Activated naive CD4-positive, alpha-beta T cell treated with anti-CD3 and anti-CD28 coated beads for 36 hours (primary cell): ENCODE measurements at regions of chr14 and their contacts with region 1.

Region 1: DNA sequence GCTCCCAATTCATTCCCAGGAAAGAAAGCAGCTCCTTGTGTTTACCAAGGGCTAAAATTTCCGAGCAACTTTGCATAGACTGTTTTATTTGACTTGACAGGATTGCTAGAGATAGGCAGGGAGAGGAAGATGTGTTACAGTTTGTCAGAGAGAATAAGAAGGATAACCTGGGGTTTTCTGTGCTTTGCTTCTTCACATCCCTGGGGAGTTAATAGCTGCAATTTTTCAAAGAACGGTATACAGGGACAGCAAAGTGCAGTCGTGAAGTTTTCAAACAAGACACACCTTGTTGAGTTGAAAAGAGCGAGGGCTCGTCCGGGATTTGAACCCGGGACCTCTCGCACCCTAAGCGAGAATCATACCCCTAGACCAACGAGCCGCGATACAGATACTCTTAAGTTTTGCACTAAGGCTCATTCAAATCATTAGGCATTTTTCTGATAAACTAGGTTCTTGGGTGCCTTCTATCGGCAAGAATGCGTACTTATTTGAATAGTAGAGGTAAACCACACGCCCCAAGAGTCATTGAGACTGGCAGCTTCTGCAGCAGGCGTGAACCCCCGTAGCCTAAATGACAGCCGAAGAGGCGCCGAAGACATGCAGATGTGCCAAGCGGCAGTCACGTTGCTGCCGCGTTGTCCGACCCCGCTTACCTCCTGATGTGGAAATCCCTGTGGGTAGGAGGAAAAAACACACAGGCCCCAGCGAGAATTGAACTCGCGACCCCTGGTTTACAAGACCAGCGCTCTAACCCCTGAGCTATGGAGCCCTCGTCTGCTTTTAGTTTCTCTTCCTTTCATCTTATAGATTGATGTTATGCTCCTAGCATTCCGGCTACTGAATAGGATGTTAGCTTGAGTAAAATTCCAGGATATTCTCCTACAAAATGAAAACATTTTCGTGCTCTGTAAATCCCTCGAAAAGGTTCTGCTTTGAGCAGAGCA is 22.2 kb upstream of the RNASE12 start:
- DNase-seq: peak; percentile 92
- H3K4me3 Mint-ChIP-seq: no peak overlapping the region
- H3K27ac Mint-ChIP-seq: no peak overlapping the region
- H3K4me1 Mint-ChIP-seq: peaks cover 10% of the 10 kb centered on the region
- H3K27me3 Mint-ChIP-seq: no peaks in the 10 kb centered on the region

Region 2: GRCh38 chr14:20305265-20306078 is 307.9 kb before region 1 on chr14 and contains the start of gene TTC5:
- CTCF ChIA-PET with region 1: no interaction called
- intact Hi-C with region 1: loop called (anchors 1 kb)
- DNase-seq: peak; percentile 92
- H3K4me3 Mint-ChIP-seq: peak within 1 kb of the TSS; percentile 96
- H3K27ac Mint-ChIP-seq: peak within 1 kb of the TSS; percentile 82
- H3K4me1 Mint-ChIP-seq: peaks cover 21% of the 10 kb centered on the region
- H3K27me3 Mint-ChIP-seq: no peaks in the 10 kb centered on the region
- total RNA-seq, gene TTC5: 15.2 to 18.5 TPM

Region 3: DNA sequence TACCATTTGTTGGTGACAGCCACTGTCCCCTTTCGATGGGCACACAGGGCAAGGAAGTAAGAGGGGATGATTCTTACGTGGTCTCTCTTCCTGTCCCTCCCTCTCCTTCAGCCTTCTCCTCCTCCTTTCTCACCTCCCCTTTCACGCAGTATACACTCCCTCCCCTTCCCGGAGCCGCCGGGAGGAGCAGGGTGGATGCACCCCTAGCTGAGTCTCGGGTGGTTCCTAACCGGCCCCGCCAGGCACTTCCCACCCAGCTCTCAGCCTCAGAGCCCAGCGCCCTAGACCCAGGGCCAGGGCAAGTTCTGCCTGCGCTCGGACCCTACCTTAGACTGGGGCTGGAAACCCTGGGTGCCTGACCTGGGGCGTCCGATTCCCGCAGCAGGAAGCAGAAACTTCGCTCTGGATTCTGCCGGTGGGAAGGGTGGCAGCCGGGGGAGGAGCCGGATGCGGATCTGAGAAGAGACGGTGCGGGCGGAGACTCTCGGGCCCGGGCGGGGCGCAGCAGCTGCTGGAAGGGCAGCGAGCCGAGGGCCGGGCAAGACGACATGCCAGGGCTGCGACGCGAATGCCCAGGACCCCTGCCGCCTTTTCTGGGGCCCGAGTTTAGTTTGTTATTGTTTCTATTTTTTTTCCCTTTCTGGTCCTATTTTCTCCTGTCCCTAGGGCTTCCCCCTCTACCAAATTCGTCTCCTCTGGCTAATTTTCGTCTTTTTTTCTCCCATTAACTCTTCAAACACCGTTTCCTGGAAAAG is 200.1 kb before region 1 on chr14 and contains the start of gene TEP1:
- CTCF ChIA-PET with region 1: interaction called, 14 read pairs
- intact Hi-C with region 1: loop called (anchors 1 kb)
- DNase-seq: peak; percentile 82
- H3K4me3 Mint-ChIP-seq: peak within 1 kb of the TSS; percentile 85
- H3K27ac Mint-ChIP-seq: peak within 1 kb of the TSS; percentile 89
- H3K4me1 Mint-ChIP-seq: peaks cover 32% of the 10 kb centered on the region
- H3K27me3 Mint-ChIP-seq: no peaks in the 10 kb centered on the region
- total RNA-seq, gene TEP1: 34.3 to 37.0 TPM

Region 4: GRCh38 chr14:20530771-20531571 is 82.4 kb before region 1 on chr14:
- CTCF ChIA-PET with region 1: interaction called, 4 read pairs
- intact Hi-C with region 1: loop called (anchors 1 kb)
- DNase-seq: peak; percentile 85
- H3K4me3 Mint-ChIP-seq: peak overlapping the region; percentile 59
- H3K27ac Mint-ChIP-seq: no peak overlapping the region
- H3K4me1 Mint-ChIP-seq: peaks cover 11% of the 10 kb centered on the region
- H3K27me3 Mint-ChIP-seq: no peaks in the 10 kb centered on the region

Region 5: GRCh38 chr14:20652996-20653975 is 39.9 kb after region 1 on chr14:
- CTCF ChIA-PET with region 1: interaction called, 4 read pairs
- intact Hi-C with region 1: loop called (anchors 1 kb)
- DNase-seq: peak; percentile 87
- H3K4me3 Mint-ChIP-seq: peak overlapping the region; percentile 69
- H3K27ac Mint-ChIP-seq: peak overlapping the region; percentile 66
- H3K4me1 Mint-ChIP-seq: peaks cover 25% of the 10 kb centered on the region
- H3K27me3 Mint-ChIP-seq: peaks cover 54% of the 10 kb centered on the region

Region 6: DNA sequence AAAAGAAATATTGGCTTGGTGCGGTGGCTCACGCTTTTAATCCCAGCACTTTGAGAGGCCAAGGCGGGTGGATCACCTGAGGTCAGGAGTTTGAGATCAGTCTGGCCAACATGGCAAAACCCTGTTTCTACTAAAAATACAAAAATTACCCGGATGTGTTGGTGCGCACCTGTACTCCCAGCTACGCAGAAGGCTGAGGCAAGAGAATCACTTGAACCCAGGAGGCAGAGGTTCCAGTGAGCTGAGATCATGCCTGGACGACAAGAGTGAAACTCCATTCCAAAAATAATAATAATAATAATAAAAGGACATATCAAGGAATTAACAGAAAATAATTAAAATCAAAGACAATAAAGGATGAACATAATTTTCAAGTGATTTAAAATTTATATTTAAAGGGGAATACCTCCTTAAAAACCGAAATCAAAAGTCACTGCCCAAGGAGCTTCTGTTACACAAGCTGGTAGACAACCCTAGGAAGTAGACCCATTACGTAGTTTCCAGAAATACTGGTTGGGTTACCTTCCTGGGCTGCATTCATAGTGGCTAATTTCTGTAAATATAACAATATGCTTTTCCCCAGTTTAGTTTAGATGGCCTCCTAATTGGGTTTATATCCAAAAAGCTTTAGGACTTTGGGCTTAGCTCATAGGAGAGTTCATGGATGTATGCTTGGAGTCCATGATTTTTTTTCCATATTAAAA is 130.0 kb after region 1 on chr14:
- CTCF ChIA-PET with region 1: no interaction called
- intact Hi-C with region 1: no loop called
- DNase-seq: no peak
- H3K4me3 Mint-ChIP-seq: no peak overlapping the region
- H3K27ac Mint-ChIP-seq: no peak overlapping the region
- H3K4me1 Mint-ChIP-seq: no peaks in the 10 kb centered on the region
- H3K27me3 Mint-ChIP-seq: no peaks in the 10 kb centered on the region

Region 7: GRCh38 chr14:20782280-20782890 is 169.0 kb after region 1 on chr14:
- CTCF ChIA-PET with region 1: interaction called, 4 read pairs
- intact Hi-C with region 1: loop called (anchors 5 kb)
- DNase-seq: peak; percentile 52
- H3K4me3 Mint-ChIP-seq: peak overlapping the region; percentile 63
- H3K27ac Mint-ChIP-seq: peak overlapping the region; percentile 46
- H3K4me1 Mint-ChIP-seq: peaks cover 22% of the 10 kb centered on the region
- H3K27me3 Mint-ChIP-seq: no peaks in the 10 kb centered on the region